ENCODE measurements at regions of chr1 and their contacts with region 1.

Region 1: DNA sequence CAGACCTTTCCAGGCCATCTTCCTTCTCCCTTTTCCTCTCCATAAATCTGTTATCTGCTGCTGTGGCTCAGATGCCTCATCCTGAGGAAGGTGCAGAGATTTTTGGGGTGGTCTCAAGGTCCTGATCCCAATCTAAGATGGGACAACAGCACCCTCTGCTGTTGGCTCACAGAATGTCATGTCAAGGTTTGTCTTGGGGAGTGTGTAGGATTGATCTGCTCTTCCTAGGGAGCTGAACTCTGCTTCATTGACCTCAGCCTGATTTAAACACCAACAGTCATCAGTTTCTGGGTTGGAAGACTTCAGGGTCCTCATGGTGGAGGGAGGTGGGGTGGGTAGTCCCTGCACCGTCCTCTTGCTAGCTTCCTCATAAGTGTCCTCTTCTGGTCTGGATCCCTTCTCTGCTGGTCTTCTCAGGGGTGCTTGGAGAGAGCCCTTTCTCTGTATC is 62.8 kb upstream of the LAX1 start:
- DNase-seq: peak; percentile 88
- H3K4me3 Mint-ChIP-seq: no peak overlapping the region
- H3K27ac Mint-ChIP-seq: peak overlapping the region; percentile 76
- H3K4me1 Mint-ChIP-seq: peaks cover 14% of the 10 kb centered on the region
- H3K27me3 Mint-ChIP-seq: no peaks in the 10 kb centered on the region

Region 2: DNA sequence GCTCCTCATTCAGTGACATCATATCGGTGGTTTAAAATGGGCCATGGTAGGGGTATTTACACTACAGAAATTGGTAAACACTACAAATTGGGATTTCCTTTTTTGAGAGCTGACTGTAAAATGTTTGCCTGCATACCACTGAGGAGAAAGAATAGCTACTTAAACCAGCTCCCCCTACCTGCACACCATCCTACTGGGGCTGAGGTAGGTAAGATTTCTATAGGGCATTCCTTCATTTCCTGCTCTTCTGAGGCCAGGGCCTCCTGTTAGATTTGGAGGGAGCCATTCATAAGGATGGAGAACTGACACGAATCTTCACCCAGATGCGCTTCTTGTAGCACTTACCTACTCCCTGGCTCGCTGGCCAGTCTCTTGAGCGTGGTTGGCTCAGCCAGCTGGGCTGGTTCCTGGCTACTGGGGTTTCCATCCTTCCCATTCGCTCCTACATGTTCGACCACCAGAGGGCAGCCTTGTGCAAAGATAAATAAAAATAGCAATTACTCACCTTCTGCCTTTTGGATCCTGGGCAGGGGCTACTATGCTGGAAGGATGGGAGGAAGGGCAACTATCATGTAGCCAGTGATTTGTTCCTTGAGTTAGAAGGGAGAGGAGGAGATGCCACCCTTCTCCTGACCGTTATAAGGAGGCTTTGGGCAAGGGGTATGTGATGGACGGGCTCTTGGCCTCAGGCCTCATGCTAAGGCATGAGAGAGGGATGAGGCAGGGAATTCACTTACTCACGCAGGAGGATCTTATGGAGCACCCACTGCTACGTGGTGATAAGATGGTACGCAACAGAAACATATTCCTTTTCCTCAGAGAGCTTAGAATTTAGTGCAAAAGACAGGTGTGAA is 197.5 kb before region 1 on chr1:
- intact Hi-C with region 1: loop called (anchors 1 kb)
- DNase-seq: peak; percentile 93
- H3K4me3 Mint-ChIP-seq: no peak overlapping the region
- H3K27ac Mint-ChIP-seq: no peak overlapping the region
- H3K4me1 Mint-ChIP-seq: peaks cover 5% of the 10 kb centered on the region
- H3K27me3 Mint-ChIP-seq: peaks cover 19% of the 10 kb centered on the region

Region 3: DNA sequence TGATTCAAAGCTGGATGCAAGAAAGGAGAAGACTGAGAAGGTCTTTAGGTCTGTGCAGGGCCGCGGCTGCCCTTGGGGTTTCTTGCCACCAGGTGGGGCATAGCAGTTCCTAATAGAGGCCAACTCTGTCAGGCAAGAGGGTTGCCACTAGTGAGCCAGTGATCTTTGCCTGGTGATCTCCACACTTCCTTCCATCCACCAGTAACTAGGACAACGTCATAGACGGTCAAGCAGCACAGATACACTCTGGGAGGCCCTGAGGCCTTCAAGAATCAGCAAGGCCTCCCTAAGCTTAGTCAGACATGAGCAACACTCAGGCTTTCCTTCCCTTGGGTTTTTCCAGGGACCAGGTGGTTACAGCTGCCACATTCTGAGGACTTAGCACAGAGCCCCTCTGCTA is 108.4 kb before region 1 on chr1:
- intact Hi-C with region 1: loop called (anchors 1 kb)
- DNase-seq: peak; percentile 87
- H3K4me3 Mint-ChIP-seq: no peak overlapping the region
- H3K27ac Mint-ChIP-seq: peak overlapping the region; percentile 2
- H3K4me1 Mint-ChIP-seq: peaks cover 29% of the 10 kb centered on the region
- H3K27me3 Mint-ChIP-seq: peaks cover 2% of the 10 kb centered on the region

Region 4: DNA sequence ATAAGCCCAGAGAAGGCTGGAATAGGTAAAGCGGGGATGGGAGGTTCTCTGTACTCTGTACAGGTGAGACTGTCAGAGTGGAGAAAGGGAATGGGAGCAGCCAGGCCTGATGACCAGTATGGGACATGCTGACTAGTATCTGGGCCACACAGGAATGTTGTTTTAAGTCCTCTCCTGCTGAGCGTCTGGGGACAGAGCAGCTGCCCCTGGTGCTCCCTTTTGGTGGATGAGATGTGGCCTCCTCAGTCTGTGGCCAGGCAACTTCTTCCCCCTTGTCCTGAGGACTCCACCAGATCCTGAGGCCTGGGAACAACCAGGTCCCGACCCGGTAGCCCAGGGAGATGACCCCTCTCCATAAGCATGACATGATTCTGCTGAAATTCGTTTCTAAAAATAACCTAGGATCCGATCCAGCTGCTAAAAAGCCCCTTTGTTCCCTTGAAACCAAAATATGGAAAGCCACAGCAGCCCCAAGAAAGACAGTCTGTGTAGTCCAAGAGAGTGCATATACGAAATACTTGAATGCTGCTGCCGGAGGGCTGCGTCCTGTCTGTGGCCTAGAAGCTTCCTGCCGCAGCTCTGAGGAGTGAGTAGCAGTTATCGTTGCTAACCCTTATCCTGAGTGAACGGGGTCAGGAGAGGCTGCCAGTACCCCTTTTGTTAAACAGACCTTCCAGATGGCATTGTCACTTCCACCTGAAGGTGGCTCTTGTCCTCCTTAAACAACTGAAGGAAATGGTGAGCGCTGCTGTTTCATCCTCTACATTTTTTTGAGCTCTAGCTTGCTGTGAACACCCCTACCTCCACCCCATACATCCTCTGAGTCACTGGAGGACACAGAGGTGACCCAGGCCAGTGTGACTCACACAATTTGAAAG is 28.4 kb before region 1 on chr1:
- intact Hi-C with region 1: loop called (anchors 1 kb)
- DNase-seq: peak; percentile 92
- H3K4me3 Mint-ChIP-seq: peak overlapping the region; percentile 75
- H3K27ac Mint-ChIP-seq: peak overlapping the region; percentile 96
- H3K4me1 Mint-ChIP-seq: peaks cover 53% of the 10 kb centered on the region
- H3K27me3 Mint-ChIP-seq: no peaks in the 10 kb centered on the region

Measured in activated CD4-positive, alpha-beta T cell treated with anti-CD3 and anti-CD28 coated beads, Interleukin-2, amount 10 ng/mL, durations not matched to agents 24 days and 14 days (primary cell).